ENCODE measurements at regions of chr16 and their contacts with region 1.

Region 1: GRCh38 chr16:48087639-48088038 is 68.2 kb downstream of the ABCC12 start:
- DNase-seq: no peak
- ATAC-seq: peak in 1 of 2 donors; percentile 34
- H3K4me3 ChIP-seq: no peak overlapping the region
- H3K27ac ChIP-seq: peak overlapping the region in 3 of 4 donors; percentile 36 to 67 (median 36)
- H3K4me1 ChIP-seq: peaks cover 20 to 28% of the 10 kb centered on the region in 2 donors
- H3K27me3 ChIP-seq: no peaks in the 10 kb centered on the region
- CTCF ChIP-seq: no peak
- POLR2A ChIP-seq: no peak

Region 2: DNA sequence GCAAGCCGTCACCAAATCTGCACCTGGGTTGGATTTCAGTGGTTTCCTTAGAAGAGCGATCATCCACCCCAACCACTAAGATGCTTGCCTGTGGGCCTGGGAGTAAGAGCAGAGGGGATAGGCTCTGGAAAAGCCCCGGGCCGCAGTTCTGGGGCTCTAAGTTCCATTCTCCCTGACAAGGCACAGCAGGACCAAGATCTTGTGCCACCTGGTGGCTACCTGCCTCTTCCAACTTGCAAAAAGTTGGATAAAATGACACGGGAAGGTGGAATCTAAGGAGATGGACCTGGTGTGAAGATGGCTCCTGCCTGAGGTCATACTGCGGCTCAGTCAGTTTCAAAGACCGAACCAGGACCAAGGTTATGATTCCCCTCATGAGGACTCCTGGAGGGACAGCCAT is 25.8 kb after region 1 on chr16:
- in situ Hi-C with region 1: no loop called
- intact Hi-C with region 1: loop called (anchors 2 kb)
- DNase-seq: no peak
- ATAC-seq: no peak
- H3K4me3 ChIP-seq: no peak overlapping the region
- H3K27ac ChIP-seq: no peak overlapping the region
- H3K4me1 ChIP-seq: peaks cover 14 to 16% of the 10 kb centered on the region in 2 donors
- H3K27me3 ChIP-seq: no peaks in the 10 kb centered on the region
- CTCF ChIP-seq: no peak
- POLR2A ChIP-seq: no peak

Region 3: GRCh38 chr16:48126801-48127644 is 39.4 kb after region 1 on chr16:
- in situ Hi-C with region 1: no loop called
- intact Hi-C with region 1: loop called (anchors 5 kb)
- DNase-seq: peak; percentile 24 to 54
- ATAC-seq: peak; percentile 60 to 89
- H3K4me3 ChIP-seq: no peak overlapping the region
- H3K27ac ChIP-seq: peak overlapping the region; percentile 62 to 71 (median 68)
- H3K4me1 ChIP-seq: peaks cover 26 to 33% of the 10 kb centered on the region in 2 donors
- H3K27me3 ChIP-seq: no peaks in the 10 kb centered on the region
- CTCF ChIP-seq: no peak
- POLR2A ChIP-seq: no peak

Region 4: DNA sequence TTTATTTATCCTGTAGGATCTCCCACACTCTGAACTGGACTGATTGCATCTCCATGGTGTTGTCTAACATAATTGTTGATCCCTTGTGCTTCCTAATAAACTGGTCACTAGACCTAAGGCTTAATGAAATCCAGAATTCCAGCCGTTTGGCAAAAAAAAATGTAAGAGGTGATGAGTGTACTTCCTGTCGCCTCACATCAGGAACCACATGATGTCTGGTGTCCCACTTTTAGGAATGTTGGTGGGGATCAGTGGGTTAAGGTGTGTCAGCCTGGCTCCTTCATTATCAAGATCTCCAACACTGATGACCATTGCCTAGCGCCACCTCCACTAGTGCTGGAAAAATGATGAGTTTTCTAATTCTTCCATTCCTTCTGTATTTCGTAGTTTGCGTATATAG is 137.8 kb after region 1 on chr16:
- in situ Hi-C with region 1: no loop called
- intact Hi-C with region 1: no loop called
- DNase-seq: no peak
- ATAC-seq: no peak
- H3K4me3 ChIP-seq: no peak overlapping the region
- H3K27ac ChIP-seq: no peak overlapping the region
- H3K4me1 ChIP-seq: no peaks in the 10 kb centered on the region
- H3K27me3 ChIP-seq: no peaks in the 10 kb centered on the region
- CTCF ChIP-seq: no peak
- POLR2A ChIP-seq: no peak

Measured in gastrocnemius medialis (tissue), 4 donors.